ENCODE measurements at regions of chr22 and their contacts with region 1.

Region 1: GRCh38 chr22:40346178-40347118 is at the start of gene ADSL:
- DNase-seq: peak; percentile 83
- H3K4me3 Mint-ChIP-seq: peak within 1 kb of the TSS; percentile 96
- H3K27ac Mint-ChIP-seq: peak within 1 kb of the TSS; percentile 98
- H3K4me1 Mint-ChIP-seq: peaks cover 37% of the 10 kb centered on the region
- H3K27me3 Mint-ChIP-seq: no peaks in the 10 kb centered on the region
- total RNA-seq, gene ADSL: 142 and 160 TPM in 2 replicates

Region 2: GRCh38 chr22:40055143-40055883 is 291.1 kb before region 1 on chr22:
- intact Hi-C with region 1: loop called (anchors 1 kb)
- DNase-seq: no peak
- H3K4me3 Mint-ChIP-seq: peak overlapping the region; percentile 68
- H3K27ac Mint-ChIP-seq: peak overlapping the region; percentile 92
- H3K4me1 Mint-ChIP-seq: peaks cover 65% of the 10 kb centered on the region
- H3K27me3 Mint-ChIP-seq: no peaks in the 10 kb centered on the region

Region 3: DNA sequence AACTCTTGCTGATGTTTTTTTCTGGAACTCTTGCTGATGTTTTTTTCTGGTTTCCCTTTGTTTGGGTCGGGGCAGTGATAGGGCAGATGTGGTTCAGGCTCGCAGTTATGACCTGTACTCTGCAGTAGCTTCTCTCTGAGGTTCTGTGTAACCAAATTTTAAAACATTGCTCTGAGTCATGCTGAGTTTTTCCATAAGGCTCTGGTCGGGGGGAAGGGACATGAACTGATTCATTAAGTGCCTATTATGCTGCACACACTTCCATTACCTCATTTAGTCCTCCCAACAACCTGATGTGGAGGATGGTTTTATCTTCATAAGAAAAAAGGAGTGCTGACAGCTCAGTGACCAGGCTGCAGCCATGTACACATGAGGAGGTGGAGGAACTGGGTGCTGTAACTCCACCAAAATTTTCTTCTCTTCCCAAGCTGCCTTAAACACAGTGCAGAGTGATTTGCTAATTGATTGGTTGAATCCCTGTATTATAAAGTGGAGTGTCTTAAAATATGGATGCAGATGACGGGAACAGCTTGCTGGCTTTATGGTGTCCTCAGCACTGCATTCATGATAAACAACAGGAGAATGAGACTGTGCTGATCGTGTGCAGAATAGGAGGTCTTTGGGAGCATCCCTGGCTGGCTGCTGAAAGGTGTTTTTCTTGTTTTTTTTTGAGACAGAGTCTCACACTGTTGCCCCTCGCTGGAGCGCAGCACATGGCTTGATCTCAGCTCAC is 149.7 kb before region 1 on chr22:
- intact Hi-C with region 1: loop called (anchors 5 kb)
- DNase-seq: no peak
- H3K4me3 Mint-ChIP-seq: no peak overlapping the region
- H3K27ac Mint-ChIP-seq: peak overlapping the region; percentile 78
- H3K4me1 Mint-ChIP-seq: peaks cover 38% of the 10 kb centered on the region
- H3K27me3 Mint-ChIP-seq: no peaks in the 10 kb centered on the region

Region 4: GRCh38 chr22:40289991-40290459 is 56.4 kb before region 1 on chr22:
- intact Hi-C with region 1: loop called (anchors 5 kb)
- DNase-seq: peak; percentile 60
- H3K4me3 Mint-ChIP-seq: peak overlapping the region; percentile 63
- H3K27ac Mint-ChIP-seq: peak overlapping the region; percentile 94
- H3K4me1 Mint-ChIP-seq: peaks cover 49% of the 10 kb centered on the region
- H3K27me3 Mint-ChIP-seq: no peaks in the 10 kb centered on the region

Region 5: GRCh38 chr22:40412441-40412840 is 66.0 kb after region 1 on chr22:
- intact Hi-C with region 1: no loop called
- DNase-seq: no peak
- H3K4me3 Mint-ChIP-seq: no peak overlapping the region
- H3K27ac Mint-ChIP-seq: peak overlapping the region; percentile 58
- H3K4me1 Mint-ChIP-seq: peaks cover 20% of the 10 kb centered on the region
- H3K27me3 Mint-ChIP-seq: no peaks in the 10 kb centered on the region

Measured in activated T-helper 2 cell treated with anti-CD3 and anti-CD28 coated beads, Interferon-gamma antibody, Interleukin-2, Interleukin-4, amounts not matched to agents 10 μg/mL and 5 μg/mL and 100 μg/mL, durations not matched to agents 14 hours and 24 hours and 36 hours (primary cell).